Activated CD4-positive, alpha-beta T cell treated with anti-CD3 and anti-CD28 coated beads for 36 hours (primary cell): ENCODE measurements at regions of chr1 and their contacts with region 1.

Region 1: DNA sequence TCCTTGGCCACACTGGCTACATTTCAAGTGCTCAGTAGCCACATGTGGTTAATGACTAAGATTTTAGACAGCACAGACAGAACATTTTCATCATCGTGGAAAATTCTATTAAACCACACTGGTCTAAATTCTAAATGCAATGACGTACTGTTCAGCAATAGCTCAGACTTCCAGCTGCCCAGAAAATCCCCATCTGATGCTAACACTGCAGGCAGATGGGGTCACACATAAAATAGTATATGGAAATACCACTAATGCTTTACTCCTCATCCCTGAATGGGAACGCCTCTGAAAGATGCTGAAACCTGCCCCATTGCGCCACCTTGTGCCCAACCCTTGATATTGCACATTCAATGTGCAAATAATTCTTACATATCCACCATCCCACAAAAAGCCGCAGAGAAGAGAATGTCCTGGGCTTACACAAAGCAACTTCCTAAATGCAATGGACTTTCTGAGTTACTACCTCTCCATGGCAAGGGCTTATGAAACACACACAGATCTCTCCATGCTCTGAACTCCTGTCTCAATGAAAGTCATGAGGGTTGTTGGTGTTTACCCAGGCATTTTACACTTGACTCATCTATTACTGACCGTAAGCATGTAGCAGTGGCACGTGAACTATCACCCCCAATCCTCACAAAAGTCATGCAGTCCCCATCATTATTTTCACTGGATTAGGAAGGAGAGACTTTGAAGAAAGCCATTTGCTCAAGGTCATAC is 20.3 kb upstream of the SLC5A9 start:
- DNase-seq: peak; percentile 80
- ATAC-seq: peak; percentile 30
- H3K4me3 Mint-ChIP-seq: no peak overlapping the region
- H3K27ac Mint-ChIP-seq: no peak overlapping the region
- H3K4me1 Mint-ChIP-seq: no peaks in the 10 kb centered on the region
- H3K27me3 Mint-ChIP-seq: no peaks in the 10 kb centered on the region

Region 2: DNA sequence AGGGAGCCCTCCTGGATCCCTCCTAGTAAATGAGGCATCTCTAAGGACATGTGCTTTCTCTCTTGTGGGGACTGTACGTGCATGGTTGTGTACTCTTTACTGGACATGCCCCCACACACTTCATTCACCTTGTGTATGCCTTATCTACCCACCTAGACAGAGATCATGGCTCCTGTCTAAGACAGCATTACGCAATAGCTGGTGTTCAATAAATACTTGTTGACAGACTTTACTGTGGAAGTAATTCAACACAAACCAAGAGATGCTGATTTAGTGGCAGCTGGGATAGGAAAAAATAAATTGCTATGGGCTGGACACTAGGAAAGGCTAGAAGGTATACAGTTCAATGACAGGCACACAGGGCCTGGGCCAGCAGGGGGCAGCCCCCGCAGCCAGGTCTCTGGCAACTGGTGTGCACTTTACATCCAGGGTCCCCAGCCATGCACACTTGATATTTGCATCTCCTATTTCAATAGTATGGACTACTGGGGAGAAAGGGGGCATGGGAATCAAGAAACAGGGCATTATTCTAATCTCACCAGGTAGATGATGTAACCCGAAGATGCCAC is 229.2 kb before region 1 on chr1:
- CTCF ChIA-PET with region 1: no interaction called
- POLR2A ChIA-PET with region 1: no interaction called
- intact Hi-C with region 1: no loop called
- DNase-seq: no peak
- ATAC-seq: no peak
- H3K4me3 Mint-ChIP-seq: no peak overlapping the region
- H3K27ac Mint-ChIP-seq: no peak overlapping the region
- H3K4me1 Mint-ChIP-seq: no peaks in the 10 kb centered on the region
- H3K27me3 Mint-ChIP-seq: peaks cover 14% of the 10 kb centered on the region

Region 3: GRCh38 chr1:47997289-47998200 is 204.6 kb before region 1 on chr1 and contains the start of gene TRABD2B:
- CTCF ChIA-PET with region 1: no interaction called
- POLR2A ChIA-PET with region 1: no interaction called
- intact Hi-C with region 1: loop called in 1 of 2 experiments (anchors 1 kb)
- DNase-seq: peak; percentile 80
- ATAC-seq: peak; percentile 92
- H3K4me3 Mint-ChIP-seq: peak within 1 kb of the TSS; percentile 53
- H3K27ac Mint-ChIP-seq: no peak within 1 kb of the TSS
- H3K4me1 Mint-ChIP-seq: peaks cover 4% of the 10 kb centered on the region
- H3K27me3 Mint-ChIP-seq: peaks cover 40% of the 10 kb centered on the region
- total RNA-seq, gene TRABD2B: not detected

Region 4: GRCh38 chr1:48093696-48094528 is 108.3 kb before region 1 on chr1:
- CTCF ChIA-PET with region 1: interaction called, 14 read pairs
- POLR2A ChIA-PET with region 1: no interaction called
- intact Hi-C with region 1: loop called (anchors 1 to 5 kb)
- DNase-seq: peak; percentile 86
- ATAC-seq: peak; percentile 89
- H3K4me3 Mint-ChIP-seq: peak overlapping the region; percentile 15
- H3K27ac Mint-ChIP-seq: no peak overlapping the region
- H3K4me1 Mint-ChIP-seq: peaks cover 4% of the 10 kb centered on the region
- H3K27me3 Mint-ChIP-seq: peaks cover 50% of the 10 kb centered on the region

Region 5: DNA sequence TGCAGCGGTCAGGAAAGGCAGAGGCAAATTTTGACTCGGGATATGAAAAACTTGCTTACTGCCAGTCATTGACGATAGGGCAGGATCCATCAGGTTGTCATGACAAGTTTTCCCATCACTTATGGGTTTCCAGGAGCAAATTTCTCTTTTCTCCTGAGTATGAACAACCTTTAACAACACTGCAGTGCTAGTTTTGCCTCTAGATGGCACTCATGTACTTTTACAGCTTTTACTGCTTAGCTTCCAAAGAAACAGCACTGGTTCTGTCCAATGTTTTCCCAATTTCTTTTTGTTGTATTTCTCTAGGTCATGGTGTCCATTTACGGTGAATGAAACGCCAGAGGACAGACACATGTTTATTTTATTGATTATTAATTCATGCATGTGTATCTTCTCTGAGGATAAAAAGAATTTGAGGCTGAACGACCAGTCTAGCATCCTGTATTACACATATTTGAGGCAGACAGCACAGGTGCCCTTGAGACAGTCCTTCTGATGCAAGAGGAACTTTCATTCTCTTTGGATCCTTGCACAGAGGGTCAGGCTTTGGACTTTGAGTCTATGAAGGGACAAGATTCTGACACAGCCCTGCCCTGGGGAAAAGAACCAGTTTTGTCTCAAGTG is 92.7 kb before region 1 on chr1:
- CTCF ChIA-PET with region 1: interaction called, 34 read pairs
- POLR2A ChIA-PET with region 1: no interaction called
- intact Hi-C with region 1: loop called (anchors 1 kb)
- DNase-seq: no peak
- ATAC-seq: no peak
- H3K4me3 Mint-ChIP-seq: no peak overlapping the region
- H3K27ac Mint-ChIP-seq: no peak overlapping the region
- H3K4me1 Mint-ChIP-seq: peaks cover 5% of the 10 kb centered on the region
- H3K27me3 Mint-ChIP-seq: peaks cover 7% of the 10 kb centered on the region

Region 6: DNA sequence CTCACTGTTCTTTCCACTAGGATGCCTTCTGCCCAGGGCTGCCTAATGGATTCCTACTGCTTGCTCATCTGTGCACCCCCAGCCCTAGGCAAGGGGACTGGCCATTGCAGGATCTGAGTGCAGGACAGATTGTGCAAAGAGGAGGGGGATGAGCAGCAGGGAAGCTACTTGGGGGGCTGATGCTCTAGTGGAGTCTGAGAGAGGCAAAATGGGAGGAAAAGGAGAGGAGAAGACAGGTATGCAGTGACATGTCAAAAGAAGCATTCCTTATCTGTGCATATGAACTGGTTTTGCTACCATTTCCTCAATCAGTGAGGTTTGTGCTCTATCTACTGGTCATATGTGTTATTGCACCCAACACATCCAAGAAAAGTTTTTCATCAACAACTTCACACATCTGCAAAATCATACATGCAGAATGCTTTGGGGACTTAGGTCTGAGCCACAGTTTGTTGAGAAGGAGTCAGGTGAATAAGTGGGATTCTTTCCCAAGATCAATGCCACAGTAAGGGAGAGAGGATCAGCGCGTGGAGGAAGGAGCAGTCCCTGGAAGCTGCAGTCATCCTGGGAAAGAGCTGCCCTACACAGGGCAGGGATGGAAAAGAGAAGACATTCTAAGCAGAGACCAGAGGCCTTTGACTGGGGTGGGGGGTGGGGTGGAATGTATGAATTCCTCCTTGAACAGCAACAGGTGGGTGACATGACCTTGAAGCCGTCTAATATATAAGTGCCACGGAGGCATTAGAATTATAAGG is 34.7 kb after region 1 on chr1:
- CTCF ChIA-PET with region 1: interaction called, 3 read pairs
- POLR2A ChIA-PET with region 1: no interaction called
- intact Hi-C with region 1: loop called in 1 of 2 experiments (anchors 2 kb)
- DNase-seq: no peak
- ATAC-seq: no peak
- H3K4me3 Mint-ChIP-seq: no peak overlapping the region
- H3K27ac Mint-ChIP-seq: no peak overlapping the region
- H3K4me1 Mint-ChIP-seq: no peaks in the 10 kb centered on the region
- H3K27me3 Mint-ChIP-seq: no peaks in the 10 kb centered on the region